ENCODE measurements at regions of chrX and their contacts with region 1.

Region 1: DNA sequence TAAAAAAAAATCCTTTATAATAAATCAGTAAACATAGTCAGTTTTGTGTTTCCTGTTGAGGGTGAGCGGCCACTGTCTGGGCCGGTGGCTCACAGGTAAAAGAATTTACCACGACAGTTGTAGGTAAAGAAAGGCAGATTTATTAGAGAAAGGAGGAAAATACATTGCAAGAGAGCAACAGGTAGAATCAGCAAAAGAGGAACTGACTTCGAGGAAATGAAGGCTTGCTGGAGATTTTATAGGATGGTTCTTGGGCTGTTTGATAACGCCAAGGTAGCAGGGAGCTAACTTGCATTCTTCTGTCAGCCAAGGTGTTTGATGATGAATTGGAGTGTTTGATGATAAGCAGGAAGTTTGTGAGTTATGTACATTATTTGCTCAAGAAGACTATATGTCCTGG is 2.8 kb downstream of the ZNF157 start:
- DNase-seq: no peak
- H3K4me3 ChIP-seq: no peak overlapping the region
- H3K27ac ChIP-seq: no peak overlapping the region
- H3K4me1 ChIP-seq: no peaks in the 10 kb centered on the region
- H3K27me3 ChIP-seq: no peaks in the 10 kb centered on the region
- CTCF ChIP-seq: no peak
- EP300 ChIP-seq: no peak
- POLR2A ChIP-seq: no peak

Region 2: DNA sequence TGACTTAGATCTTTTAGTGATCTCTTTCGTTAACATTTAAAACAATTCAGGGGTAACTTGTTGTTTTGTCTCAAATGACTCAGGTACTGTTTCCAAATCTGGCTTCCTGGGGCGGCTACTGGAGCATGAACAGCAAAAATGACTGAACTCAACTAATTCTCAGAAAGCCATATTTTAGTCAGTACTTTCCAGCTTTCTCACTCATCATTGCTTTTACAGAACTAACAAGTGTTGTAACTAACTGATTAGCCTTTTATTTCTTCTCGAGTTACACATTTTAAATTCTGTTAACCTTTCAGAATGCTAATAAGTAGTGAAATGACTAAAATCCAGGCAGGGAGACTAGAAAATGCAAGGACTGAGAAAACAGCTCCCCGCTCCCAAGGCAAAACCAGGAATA is 405.7 kb before region 1 on chrX:
- intact Hi-C with region 1: loop called in 1 of 4 experiments (anchors 10 kb)
- DNase-seq: no peak
- H3K4me3 ChIP-seq: no peak overlapping the region
- H3K27ac ChIP-seq: no peak overlapping the region
- H3K4me1 ChIP-seq: no peaks in the 10 kb centered on the region
- H3K27me3 ChIP-seq: no peaks in the 10 kb centered on the region
- CTCF ChIP-seq: no peak
- EP300 ChIP-seq: no peak
- POLR2A ChIP-seq: no peak

Region 3: GRCh38 chrX:47078129-47079043 is 294.8 kb before region 1 on chrX and contains the start of gene RGN:
- intact Hi-C with region 1: no loop called
- DNase-seq: peak; percentile 18 to 58 (median 33)
- H3K4me3 ChIP-seq: peak within 1 kb of the TSS; percentile 2
- H3K27ac ChIP-seq: peak within 1 kb of the TSS in 1 of 2 donors; percentile 31
- H3K4me1 ChIP-seq: no peaks in the 10 kb centered on the region
- H3K27me3 ChIP-seq: no peaks in the 10 kb centered on the region
- CTCF ChIP-seq: no peak
- EP300 ChIP-seq: no peak
- POLR2A ChIP-seq: no peak
- total RNA-seq, gene RGN: 6.8 to 47.0 (median 16.5) TPM

Region 4: GRCh38 chrX:47166126-47166525 is 207.1 kb before region 1 on chrX:
- intact Hi-C with region 1: no loop called
- DNase-seq: peak in 1 of 5 donors; percentile 1
- H3K4me3 ChIP-seq: no peak overlapping the region
- H3K27ac ChIP-seq: no peak overlapping the region
- H3K4me1 ChIP-seq: no peaks in the 10 kb centered on the region
- H3K27me3 ChIP-seq: no peaks in the 10 kb centered on the region
- CTCF ChIP-seq: no peak
- EP300 ChIP-seq: no peak
- POLR2A ChIP-seq: no peak

Region 5: DNA sequence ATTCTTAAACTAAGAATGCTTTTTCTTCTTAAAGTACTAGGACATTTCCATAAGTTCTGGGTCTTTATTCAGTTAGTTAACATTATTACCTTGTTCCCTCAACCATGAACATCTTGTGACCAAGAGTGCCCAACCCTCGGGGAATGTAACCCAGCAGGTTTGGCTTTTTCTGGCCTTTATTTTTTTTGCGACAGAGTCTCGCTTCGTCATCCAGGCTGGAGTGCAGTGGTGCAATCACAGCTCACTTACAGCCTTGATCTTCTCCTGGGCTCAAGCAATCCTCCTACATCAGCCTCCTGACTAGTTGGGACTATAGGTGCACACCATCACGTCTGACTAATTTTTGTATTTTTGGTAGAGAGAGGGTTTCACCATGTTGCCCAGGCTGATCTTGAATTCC is 75.3 kb before region 1 on chrX:
- intact Hi-C with region 1: no loop called
- DNase-seq: no peak
- H3K4me3 ChIP-seq: no peak overlapping the region
- H3K27ac ChIP-seq: no peak overlapping the region
- H3K4me1 ChIP-seq: no peaks in the 10 kb centered on the region
- H3K27me3 ChIP-seq: no peaks in the 10 kb centered on the region
- CTCF ChIP-seq: no peak
- EP300 ChIP-seq: no peak
- POLR2A ChIP-seq: no peak

Region 6: DNA sequence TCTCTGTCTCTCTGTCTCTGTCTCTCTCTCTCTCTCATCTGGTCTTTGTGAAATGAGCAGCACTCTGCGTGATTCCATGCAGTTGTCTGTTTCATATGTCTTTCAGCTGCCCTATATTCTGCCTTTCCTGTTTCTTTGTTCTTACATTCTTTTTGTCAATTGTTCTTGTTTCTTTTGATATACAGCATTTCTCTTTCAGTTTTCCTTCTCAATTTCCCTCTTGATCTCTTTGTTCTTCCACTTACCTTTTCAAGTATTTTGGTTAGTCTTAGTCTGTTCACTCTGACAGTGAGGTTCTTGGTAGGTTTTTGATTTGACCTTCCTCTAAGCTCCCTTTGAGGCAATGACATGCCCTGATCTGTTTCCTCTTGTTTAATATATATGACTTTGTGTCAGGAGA is 17.6 kb after region 1 on chrX:
- intact Hi-C with region 1: no loop called
- DNase-seq: no peak
- H3K4me3 ChIP-seq: no peak overlapping the region
- H3K27ac ChIP-seq: no peak overlapping the region
- H3K4me1 ChIP-seq: no peaks in the 10 kb centered on the region
- H3K27me3 ChIP-seq: no peaks in the 10 kb centered on the region
- CTCF ChIP-seq: no peak
- EP300 ChIP-seq: no peak
- POLR2A ChIP-seq: no peak

Measured in ovary (tissue), 10 donors.